IMR-90 (cell line): ENCODE measurements at regions of chr20 and their contacts with region 1.

Region 1: GRCh38 chr20:62953839-62954703 is 1.6 kb downstream of the SLC17A9 start:
- DNase-seq: peak; percentile 54
- ATAC-seq: peak; percentile 79
- H3K4me3 ChIP-seq: no peak overlapping the region
- H3K27ac ChIP-seq: peak overlapping the region; percentile 78
- H3K4me1 ChIP-seq: peaks cover 13% of the 10 kb centered on the region
- H3K27me3 ChIP-seq: no peaks in the 10 kb centered on the region
- CTCF ChIP-seq: no peak
- POLR2A ChIP-seq: peak; percentile 37; the same call in 1 of the 2 replicates
- RAD21 ChIP-seq: no peak

Region 2: DNA sequence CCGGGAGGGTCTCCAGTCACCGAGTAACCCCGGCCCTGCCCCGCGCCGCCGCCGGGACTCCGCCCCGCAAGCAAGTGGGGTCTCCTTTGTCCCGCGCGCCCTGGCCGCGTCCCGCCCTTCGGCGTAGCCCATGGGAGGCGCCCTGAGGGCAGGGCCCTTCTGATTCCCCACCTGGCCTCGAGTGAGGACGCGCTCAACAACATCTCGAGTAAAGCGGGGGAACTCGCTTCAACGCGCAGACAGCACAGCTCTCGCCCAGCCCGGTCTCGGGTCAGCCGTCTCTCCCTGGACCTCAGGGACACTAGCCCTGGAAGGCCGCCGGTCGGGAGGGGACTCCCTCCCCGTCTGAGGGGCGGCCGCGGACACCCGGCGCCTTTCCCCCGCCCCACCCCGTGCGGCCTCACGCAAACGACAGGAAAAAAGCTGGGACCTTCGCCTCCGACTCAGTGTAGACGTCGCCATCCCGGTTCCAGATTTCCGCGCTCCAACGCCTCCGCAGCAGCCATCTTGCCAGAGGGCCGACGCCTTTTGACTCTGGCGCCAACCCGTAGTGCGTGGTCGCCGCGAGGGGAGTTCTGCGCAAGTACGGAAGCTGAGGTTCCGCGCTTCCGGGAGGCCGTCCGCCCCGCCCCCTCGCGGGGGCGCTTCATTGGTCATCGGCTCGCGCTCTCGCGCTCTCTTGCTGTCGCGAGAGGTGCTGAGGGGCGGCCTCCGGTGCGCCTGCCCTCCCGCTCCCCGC is 16.5 kb before region 1 on chr20:
- CTCF ChIA-PET with region 1: interaction called, 3 read pairs
- POLR2A ChIA-PET with region 1: interaction called, 13 read pairs
- dilution Hi-C with region 1: no loop called
- in situ Hi-C with region 1: no loop called
- intact Hi-C with region 1: no loop called
- DNase-seq: peak; percentile 96
- ATAC-seq: peak; percentile 90
- H3K4me3 ChIP-seq: peak overlapping the region; percentile 96
- H3K27ac ChIP-seq: peak overlapping the region; percentile 84
- H3K4me1 ChIP-seq: peaks cover 13% of the 10 kb centered on the region
- H3K27me3 ChIP-seq: no peaks in the 10 kb centered on the region
- CTCF ChIP-seq: no peak
- POLR2A ChIP-seq: peak; percentile 70
- RAD21 ChIP-seq: no peak